ENCODE measurements at regions of chr11 and their contacts with region 1.

Region 1: DNA sequence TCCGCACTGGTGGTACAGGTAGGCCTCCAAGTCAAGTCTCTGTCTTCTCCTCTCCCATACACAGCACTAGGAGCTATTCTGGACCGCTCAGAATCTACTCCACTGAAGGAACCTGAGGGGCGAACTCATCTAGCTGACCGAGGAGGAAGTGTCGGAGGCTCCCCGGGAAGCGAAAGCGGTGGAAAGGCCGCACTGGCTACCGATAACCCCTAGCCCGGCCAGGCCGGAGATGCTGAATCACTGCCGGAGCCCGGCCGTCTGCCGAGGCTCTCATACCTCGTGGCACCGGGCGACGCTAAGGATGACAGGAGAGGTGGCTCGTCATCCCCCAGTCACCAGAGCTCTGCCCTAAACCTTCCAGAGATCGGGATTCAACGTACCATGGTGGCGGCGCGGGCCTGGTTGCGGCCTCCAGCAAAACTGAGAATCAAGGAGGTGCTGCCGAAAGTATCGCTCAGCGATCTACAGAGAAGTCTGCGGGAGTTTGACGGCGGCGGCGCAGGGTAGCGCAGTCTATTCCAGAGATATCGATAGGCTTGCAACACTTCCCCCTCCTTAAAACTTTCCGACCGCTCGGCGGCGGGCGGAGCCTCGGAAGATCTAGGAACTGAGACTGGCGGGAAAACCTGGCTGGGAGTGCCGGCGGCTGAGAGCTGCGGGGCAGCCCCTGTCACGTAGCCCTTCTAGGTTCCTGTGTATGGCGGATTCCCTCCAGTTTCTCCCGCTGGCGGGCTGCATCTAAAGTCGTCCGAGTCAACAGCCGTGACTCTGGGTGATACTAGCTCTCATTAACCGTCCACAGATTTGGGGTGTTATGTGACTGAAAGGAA is at the start of gene PSMA1:
- DNase-seq: peak; percentile 98
- ATAC-seq: peak; percentile 87
- H3K4me3 Mint-ChIP-seq: peak within 1 kb of the TSS; percentile 93
- H3K27ac Mint-ChIP-seq: peak within 1 kb of the TSS; percentile 95
- H3K4me1 Mint-ChIP-seq: peaks cover 25% of the 10 kb centered on the region
- H3K27me3 Mint-ChIP-seq: no peaks in the 10 kb centered on the region
- total RNA-seq, gene PSMA1: 231 to 330 TPM

Region 2: DNA sequence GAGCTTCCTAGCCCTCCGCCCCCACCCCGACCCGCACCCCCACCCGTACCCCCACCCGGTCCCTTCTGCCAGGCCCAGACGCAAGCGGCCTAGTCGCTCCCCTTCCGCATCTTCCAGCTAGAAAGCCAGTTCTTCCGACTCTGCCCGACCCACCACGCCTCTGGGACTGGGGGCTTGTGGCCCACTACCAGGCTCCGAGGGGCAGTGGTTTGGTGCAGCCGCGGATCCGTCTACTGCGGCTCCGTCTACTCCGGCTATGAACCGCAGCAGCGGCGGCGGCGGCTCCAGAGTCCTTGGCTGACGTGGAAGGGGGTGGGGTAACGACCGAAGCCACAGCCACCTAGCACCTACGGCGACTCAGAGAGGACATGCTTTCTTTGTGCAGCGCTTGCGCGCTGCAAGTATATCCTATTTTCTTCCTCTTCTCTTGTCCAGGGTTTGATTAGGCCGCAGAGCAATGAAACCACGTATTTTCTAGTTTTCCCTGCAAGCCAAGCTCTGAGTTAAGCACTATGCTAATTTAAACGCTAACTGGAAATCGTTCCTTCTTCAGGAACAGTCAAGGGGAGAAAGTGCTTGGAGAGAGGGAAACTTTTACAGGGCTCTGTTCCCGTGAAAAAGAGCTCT is 20.5 kb before region 1 on chr11 and contains the start of gene COPB1:
- CTCF ChIA-PET with region 1: interaction called, 4 read pairs
- POLR2A ChIA-PET with region 1: interaction called, 6 read pairs
- intact Hi-C with region 1: loop called (anchors 1 kb)
- DNase-seq: peak; percentile 96
- ATAC-seq: peak; percentile 92
- H3K4me3 Mint-ChIP-seq: peak within 1 kb of the TSS; percentile 87
- H3K27ac Mint-ChIP-seq: peak within 1 kb of the TSS; percentile 95
- H3K4me1 Mint-ChIP-seq: peaks cover 35% of the 10 kb centered on the region
- H3K27me3 Mint-ChIP-seq: no peaks in the 10 kb centered on the region
- total RNA-seq, gene COPB1: 102 to 106 TPM

Region 3: DNA sequence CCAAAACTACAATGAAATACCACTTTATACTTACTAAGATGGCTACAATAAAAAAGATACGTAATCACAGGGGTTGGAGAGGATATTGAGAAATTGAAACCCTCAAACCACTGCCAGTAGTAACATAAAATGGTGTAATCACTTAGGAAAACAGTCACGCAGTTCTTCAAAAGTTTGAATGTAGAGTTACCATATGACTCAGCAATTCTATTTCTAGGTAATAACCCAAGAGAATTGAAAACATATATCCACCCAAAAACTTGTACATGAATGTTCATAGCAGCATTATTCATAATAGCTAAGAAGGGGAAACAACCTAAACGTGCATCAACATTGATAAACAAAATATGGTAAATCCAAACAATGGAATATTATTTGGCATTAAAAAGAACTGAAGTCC is 24.5 kb after region 1 on chr11:
- CTCF ChIA-PET with region 1: no interaction called
- POLR2A ChIA-PET with region 1: no interaction called
- intact Hi-C with region 1: loop called in 1 of 2 experiments (anchors 1 kb)
- DNase-seq: no peak
- ATAC-seq: peak; percentile 79
- H3K4me3 Mint-ChIP-seq: no peak overlapping the region
- H3K27ac Mint-ChIP-seq: peak overlapping the region; percentile 72
- H3K4me1 Mint-ChIP-seq: peaks cover 40% of the 10 kb centered on the region
- H3K27me3 Mint-ChIP-seq: no peaks in the 10 kb centered on the region

Region 4: DNA sequence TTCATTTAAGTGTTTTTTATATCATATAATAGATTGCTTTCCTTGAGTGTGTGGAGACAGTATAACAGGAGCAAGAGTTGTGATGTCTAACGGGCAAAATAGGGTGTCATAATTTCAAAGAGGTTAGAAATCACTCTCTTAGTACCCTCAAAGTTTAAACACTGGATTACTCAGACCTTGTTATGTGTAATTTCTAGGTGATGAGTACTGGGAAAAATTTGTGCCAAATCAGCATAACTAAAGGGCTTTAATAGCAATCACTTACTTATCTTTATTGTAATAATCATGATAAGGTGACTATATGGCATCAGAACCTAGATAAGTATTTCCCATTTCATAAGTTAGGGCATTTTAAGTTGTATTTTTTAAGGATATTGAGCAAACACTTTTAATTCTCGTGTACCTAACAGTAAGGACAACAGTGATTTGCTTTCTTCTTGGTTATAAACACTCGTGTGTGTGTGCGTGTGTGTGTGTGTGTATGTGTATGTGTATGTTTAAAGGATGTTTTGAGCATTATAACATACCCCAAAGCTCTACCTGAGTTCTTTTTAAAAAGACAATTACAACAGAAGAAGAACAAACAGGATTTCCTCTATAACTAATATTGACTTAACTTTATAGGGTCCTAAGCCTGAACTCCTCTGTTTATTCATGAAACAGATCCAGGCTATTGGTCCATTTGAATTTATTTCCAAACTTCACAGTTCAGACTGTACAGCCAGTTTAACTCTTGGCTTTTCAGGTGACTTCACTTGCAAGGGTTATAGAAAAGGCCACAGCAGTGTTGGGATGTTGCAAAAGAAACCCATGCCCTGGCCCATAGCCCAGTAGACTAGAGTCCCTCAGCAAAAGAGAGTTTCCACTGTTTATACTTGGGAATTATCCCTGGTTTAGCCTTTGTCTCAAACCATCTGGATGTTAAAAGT is 99.7 kb after region 1 on chr11:
- CTCF ChIA-PET with region 1: no interaction called
- POLR2A ChIA-PET with region 1: no interaction called
- intact Hi-C with region 1: no loop called
- DNase-seq: no peak
- ATAC-seq: peak; percentile 68
- H3K4me3 Mint-ChIP-seq: no peak overlapping the region
- H3K27ac Mint-ChIP-seq: no peak overlapping the region
- H3K4me1 Mint-ChIP-seq: peaks cover 42% of the 10 kb centered on the region
- H3K27me3 Mint-ChIP-seq: no peaks in the 10 kb centered on the region

Region 5: DNA sequence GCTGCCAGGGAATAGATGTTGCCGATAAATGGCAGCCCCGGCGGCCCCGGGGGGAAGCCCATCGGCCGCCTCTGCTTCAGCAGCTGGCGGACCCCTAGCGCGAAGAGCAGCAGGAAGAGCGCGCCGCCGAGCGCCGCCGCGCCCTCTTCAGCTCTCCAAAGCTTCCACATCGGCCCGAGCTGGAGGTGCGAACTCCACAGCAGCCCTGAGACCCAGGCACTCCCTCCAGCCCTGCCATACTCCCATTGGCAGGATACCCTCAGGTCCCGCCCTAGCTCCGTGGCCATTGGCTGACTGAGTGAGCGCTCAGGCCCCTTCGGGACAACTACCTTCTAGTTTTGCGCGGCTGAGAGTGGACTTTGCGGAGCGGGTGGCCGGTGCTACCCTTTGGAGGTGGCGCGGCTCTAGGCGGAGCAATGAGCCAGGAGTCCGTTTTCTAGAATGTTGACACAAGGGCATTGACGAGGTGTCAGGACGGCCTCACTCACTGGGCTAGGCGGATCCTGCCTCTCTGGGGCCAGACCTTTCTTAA is 372.0 kb after region 1 on chr11 and contains the start of gene CYP2R1:
- CTCF ChIA-PET with region 1: interaction called, 4 read pairs
- POLR2A ChIA-PET with region 1: interaction called, 4 read pairs
- intact Hi-C with region 1: loop called (anchors 1 kb)
- DNase-seq: peak; percentile 94
- ATAC-seq: peak; percentile 84
- H3K4me3 Mint-ChIP-seq: peak within 1 kb of the TSS; percentile 81
- H3K27ac Mint-ChIP-seq: peak within 1 kb of the TSS; percentile 96
- H3K4me1 Mint-ChIP-seq: peaks cover 52% of the 10 kb centered on the region
- H3K27me3 Mint-ChIP-seq: peaks cover 2% of the 10 kb centered on the region
- total RNA-seq, gene CYP2R1: 13.1 to 14.8 TPM